ENCODE measurements at regions of chr19 and their contacts with region 1.

Region 1: DNA sequence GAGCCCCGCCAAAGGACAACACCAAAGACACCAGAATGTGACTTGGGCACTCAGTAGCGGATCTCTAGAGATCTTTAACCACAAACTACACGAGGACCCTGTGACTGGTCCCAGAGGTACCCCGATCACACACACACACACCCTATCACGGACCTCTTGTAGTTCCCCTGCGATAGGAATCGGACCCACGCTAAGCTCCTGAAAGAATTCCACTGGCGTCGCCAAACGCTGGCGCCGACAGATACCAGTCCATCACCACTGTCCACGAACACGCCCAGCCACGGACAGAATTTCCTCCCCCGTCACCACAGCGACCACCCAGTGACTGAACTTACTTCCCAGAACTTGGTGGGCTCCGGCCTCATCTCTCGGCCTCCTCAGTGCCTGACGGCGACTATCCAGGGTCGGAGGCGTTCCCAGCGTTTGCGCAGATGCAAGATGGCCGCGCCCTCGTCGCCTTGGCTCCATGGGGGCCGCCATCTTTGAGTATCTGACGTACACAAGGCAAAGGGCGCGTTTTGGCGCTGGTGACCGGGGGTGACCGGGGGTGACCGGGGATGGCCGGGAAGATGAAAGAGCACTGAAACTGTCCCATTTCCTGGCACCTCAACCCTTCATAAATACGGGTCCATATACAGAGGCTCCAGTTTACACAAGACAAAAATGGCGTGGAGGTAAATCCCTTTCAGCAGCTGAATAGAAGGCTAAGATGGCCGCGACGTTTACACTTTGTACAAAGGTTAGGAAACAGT is at the start of gene ZNF615:
- DNase-seq: peak; percentile 92 to 98 (median 95)

Region 2: DNA sequence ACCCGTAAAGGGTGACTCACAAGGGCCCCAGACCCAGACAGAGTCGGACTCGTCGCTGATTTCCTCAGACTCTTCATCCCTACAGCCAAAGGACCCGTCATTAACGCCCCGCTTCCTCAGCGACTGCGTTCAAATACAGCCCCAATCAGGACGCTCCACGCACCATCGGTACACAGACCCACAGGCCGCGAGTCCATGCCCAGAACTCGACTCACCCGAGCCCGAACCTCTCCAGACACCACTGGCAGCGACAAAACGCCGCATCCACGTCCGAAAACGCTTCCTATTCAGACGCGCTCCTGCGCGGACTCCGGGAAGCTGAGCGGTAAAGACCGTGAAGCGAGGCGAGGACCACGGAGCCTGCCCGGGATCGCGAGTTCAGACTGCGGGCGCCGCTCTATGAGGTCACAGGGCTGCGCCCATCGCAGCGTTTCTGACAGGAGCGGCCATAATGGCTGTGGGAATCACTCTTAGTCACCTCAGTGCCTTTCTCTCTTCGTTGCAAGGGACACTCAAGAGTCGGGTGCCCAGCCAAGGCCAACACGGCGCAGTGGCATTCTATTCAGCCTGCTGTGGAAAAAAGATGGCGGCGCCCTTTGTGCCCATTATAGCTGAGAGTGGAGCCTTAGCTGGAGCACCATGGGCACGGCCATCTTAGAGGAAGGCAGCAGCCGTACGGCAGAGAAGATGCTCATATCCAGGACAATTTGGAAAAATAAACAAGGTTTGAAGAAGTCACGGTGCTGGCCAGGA is 20.2 kb after region 1 on chr19 and contains the start of gene ZNF614:
- intact Hi-C with region 1: loop called (anchors 2 kb)
- DNase-seq: peak; percentile 81 to 95 (median 91)